ENCODE measurements at regions of chr1 and their contacts with region 1.

Region 1: DNA sequence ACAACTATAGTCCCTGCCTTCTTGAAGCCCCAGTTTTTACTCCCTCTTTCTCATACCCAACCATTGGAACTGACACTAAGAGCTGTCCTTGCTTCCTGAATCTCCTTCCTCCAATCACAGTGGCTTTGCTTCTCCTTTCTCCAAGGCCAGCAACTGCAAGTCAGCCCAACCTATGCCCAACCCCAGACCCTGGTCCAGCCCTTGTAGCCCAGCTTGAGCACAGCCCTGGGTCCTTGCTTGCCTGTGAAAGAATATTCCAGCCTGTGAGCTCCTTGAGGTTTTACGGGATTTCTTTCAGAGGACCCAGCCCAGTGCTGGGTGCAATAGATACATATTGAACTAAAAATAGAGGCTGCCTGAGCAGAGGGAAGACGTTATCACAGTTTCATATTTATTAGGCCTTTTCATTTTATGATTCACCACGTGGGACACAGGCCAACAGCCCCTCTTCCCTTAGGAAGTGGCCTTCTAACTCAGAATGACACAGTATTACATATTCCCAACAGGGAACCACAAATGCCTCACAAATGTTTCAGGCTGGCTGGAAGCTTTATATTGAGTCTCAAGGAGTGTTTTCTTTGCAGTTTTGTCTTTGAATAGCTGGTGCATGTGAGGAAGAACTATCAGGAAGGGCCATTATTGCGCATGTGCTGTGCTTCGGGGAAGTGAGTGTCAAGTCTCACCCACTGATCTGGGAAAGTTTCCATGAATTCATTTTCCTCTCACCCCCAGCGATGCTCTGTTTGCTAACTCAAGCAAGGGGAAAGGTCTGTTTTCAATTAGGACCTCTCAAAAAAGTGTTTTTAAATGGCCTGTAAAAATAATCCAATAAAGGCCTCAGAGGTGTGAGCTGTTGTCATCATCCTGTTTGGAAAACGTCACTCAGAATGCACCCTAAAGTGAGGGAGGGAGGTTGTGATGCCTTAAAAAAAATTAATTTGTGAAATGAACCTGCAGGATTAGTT is 92.3 kb upstream of the NFIA start:
- DNase-seq: no peak
- H3K4me3 ChIP-seq: no peak overlapping the region
- H3K27ac ChIP-seq: peak overlapping the region; percentile 60
- H3K4me1 ChIP-seq: peaks cover 20% of the 10 kb centered on the region
- H3K27me3 ChIP-seq: no peaks in the 10 kb centered on the region
- CTCF ChIP-seq: no peak
- POLR2A ChIP-seq: no peak

Region 2: GRCh38 chr1:61453111-61453961 is 463.3 kb after region 1 on chr1:
- intact Hi-C with region 1: loop called (anchors 10 kb)
- DNase-seq: peak in 1 of 2 donors; percentile 95
- H3K4me3 ChIP-seq: no peak overlapping the region
- H3K27ac ChIP-seq: peak overlapping the region; percentile 54
- H3K4me1 ChIP-seq: peaks cover 56% of the 10 kb centered on the region
- H3K27me3 ChIP-seq: no peaks in the 10 kb centered on the region
- CTCF ChIP-seq: peak; percentile 12 to 66 (median 58)
- POLR2A ChIP-seq: no peak